Endothelial cell of umbilical vein (primary cell): ENCODE measurements at regions of chr10 and their contacts with region 1.

Region 1: DNA sequence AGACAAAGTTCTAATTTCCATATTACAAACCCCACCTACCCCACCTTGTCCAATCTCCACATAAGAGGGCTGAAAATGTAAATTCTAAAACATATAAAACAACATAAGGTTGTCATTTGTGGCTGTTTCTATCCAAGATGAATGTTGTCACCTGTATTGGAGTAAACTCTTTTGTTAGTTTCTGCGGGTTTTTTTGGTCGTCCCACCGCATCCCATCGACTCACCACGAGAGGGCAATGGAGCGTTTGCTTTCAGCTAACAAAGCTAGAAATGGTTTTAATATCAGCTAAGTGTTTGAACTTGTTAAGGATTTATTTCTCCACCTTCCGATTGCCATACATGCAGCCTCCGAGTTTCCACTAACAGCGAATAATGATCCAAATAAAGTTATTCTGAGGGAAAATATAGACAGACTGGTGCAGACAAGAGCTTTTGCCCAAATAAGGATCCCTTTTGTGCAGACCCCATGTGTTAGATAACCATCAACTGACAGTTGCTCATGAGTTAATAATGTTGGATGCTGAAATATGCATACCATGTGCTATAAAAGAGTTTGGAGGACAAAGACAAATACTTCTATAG is 137.2 kb downstream of the ARID5B start:
- DNase-seq: peak; percentile 85
- H3K4me3 ChIP-seq: no peak overlapping the region
- H3K27ac ChIP-seq: no peak overlapping the region
- H3K4me1 ChIP-seq: peaks cover 11% of the 10 kb centered on the region
- H3K27me3 ChIP-seq: no peaks in the 10 kb centered on the region
- CTCF ChIP-seq: peak; percentile 78 to 85
- POLR2A ChIP-seq: no peak

Region 2: GRCh38 chr10:61896854-61897661 is 141.6 kb before region 1 on chr10:
- CTCF ChIA-PET with region 1: interaction called, 36 read pairs
- POLR2A ChIA-PET with region 1: no interaction called
- dilution Hi-C with region 1: no loop called
- intact Hi-C with region 1: loop called (anchors 1 kb)
- DNase-seq: peak; percentile 59
- H3K4me3 ChIP-seq: peak overlapping the region in 2 of 3 experiments; percentile 4 to 6
- H3K27ac ChIP-seq: no peak overlapping the region
- H3K4me1 ChIP-seq: peaks cover 24% of the 10 kb centered on the region
- H3K27me3 ChIP-seq: no peaks in the 10 kb centered on the region
- CTCF ChIP-seq: peak; percentile 69 to 73
- POLR2A ChIP-seq: no peak

Region 3: DNA sequence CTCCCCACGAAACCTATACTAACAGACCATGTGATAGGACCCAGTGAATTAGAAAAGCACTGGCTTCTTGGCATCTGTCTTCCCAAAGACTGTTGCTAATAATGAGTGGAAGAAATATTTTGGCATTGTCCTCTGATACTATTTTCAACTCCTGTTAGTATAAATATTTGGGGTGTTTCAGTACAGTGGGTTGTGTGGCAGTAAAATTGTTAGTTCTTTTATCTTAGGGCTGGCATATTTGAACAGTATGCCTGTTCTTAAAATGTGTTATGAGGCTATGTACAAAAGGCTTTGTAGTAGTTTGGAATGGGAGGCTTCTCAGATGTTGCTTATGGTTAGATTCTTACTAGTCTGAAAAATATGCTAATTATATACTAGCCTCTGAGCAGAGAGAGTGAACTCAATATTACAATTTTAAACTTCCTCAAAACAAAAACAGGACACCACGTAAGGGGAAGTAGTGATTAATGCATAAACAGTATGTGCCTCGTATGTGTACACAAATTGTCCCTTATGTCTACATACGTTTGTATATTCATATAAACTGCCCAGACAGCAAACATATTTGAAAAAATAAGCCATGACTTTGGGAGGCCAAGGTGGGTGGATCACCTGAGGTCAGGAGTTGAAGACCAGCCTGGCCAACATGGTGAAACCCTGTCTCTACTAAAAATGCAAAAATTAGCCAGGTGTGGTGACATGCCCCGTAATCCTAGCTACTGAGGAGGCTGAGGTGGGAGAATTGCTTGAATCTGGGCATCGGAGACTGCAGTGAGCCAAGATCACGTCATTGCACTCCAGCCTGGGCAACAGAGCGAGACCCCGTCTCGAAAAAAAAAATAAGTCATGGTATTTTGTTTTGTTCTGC is 21.8 kb before region 1 on chr10:
- CTCF ChIA-PET with region 1: interaction called, 10 read pairs
- POLR2A ChIA-PET with region 1: no interaction called
- dilution Hi-C with region 1: no loop called
- intact Hi-C with region 1: no loop called
- DNase-seq: peak; percentile 36
- H3K4me3 ChIP-seq: no peak overlapping the region
- H3K27ac ChIP-seq: no peak overlapping the region
- H3K4me1 ChIP-seq: peaks cover 18% of the 10 kb centered on the region
- H3K27me3 ChIP-seq: no peaks in the 10 kb centered on the region
- CTCF ChIP-seq: no peak
- POLR2A ChIP-seq: no peak

Region 4: GRCh38 chr10:62082729-62083411 is 44.2 kb after region 1 on chr10:
- CTCF ChIA-PET with region 1: interaction called, 16 read pairs
- POLR2A ChIA-PET with region 1: no interaction called
- dilution Hi-C with region 1: no loop called
- intact Hi-C with region 1: loop called (anchors 1 kb)
- DNase-seq: peak; percentile 94
- H3K4me3 ChIP-seq: peak overlapping the region in 1 of 3 experiments; percentile 43
- H3K27ac ChIP-seq: peak overlapping the region; percentile 100
- H3K4me1 ChIP-seq: peaks cover 37% of the 10 kb centered on the region
- H3K27me3 ChIP-seq: no peaks in the 10 kb centered on the region
- CTCF ChIP-seq: no peak
- POLR2A ChIP-seq: peak; percentile 60

Region 5: GRCh38 chr10:62244780-62245467 is 206.2 kb after region 1 on chr10:
- CTCF ChIA-PET with region 1: interaction called, 468 read pairs
- POLR2A ChIA-PET with region 1: interaction called, 5 read pairs
- dilution Hi-C with region 1: no loop called
- intact Hi-C with region 1: loop called (anchors 1 kb)
- DNase-seq: peak; percentile 86
- H3K4me3 ChIP-seq: no peak overlapping the region
- H3K27ac ChIP-seq: no peak overlapping the region
- H3K4me1 ChIP-seq: peaks cover 17% of the 10 kb centered on the region
- H3K27me3 ChIP-seq: no peaks in the 10 kb centered on the region
- CTCF ChIP-seq: peak; percentile 63 to 71
- POLR2A ChIP-seq: no peak

Region 6: GRCh38 chr10:62437696-62438095 is 399.0 kb after region 1 on chr10:
- CTCF ChIA-PET with region 1: interaction called, 8 read pairs
- POLR2A ChIA-PET with region 1: no interaction called
- dilution Hi-C with region 1: no loop called
- intact Hi-C with region 1: loop called (anchors 5 kb)
- DNase-seq: peak; percentile 73
- H3K4me3 ChIP-seq: no peak overlapping the region
- H3K27ac ChIP-seq: no peak overlapping the region
- H3K4me1 ChIP-seq: peaks cover 14% of the 10 kb centered on the region
- H3K27me3 ChIP-seq: no peaks in the 10 kb centered on the region
- CTCF ChIP-seq: peak; percentile 54 to 58
- POLR2A ChIP-seq: no peak